IMR-90 (cell line): ENCODE measurements at regions of chrX and their contacts with region 1.

Region 1: DNA sequence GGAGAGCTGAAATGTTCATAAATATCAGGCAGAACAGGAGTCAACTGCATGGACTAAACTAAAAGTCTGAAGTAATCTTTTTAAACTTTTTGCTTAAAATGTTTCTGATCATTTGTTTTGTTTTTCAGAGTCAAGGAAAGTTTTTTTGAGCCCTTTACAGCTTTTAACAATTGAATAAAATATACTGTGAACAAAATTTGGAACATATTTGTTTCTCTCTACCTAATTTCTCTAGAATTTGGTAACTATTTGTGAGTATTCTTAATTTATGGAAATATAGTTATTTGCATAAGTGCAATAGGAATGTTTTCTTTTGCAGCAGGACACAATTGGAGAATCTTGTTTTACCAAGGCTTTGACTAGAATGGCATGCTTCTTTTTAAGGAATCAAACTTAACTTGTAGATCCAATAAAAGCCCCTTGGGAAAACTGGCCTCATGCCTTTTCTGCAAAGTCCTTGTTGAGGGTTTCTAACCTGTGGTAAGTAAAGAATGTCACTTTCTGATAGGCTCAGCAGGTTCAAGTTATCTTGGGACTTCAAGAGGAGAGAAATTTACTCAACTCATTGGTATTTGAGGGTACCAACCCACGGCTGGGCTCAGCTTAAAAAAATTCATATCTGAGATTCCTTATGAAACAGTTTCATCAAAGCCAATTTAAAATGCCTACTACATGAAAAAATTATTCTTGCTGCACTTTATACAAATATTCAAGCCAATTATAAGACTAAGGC is 91.5 kb downstream of the UPRT start:
- DNase-seq: no peak
- ATAC-seq: no peak
- H3K4me3 ChIP-seq: no peak overlapping the region
- H3K27ac ChIP-seq: no peak overlapping the region
- H3K4me1 ChIP-seq: no peaks in the 10 kb centered on the region
- H3K27me3 ChIP-seq: no peaks in the 10 kb centered on the region
- CTCF ChIP-seq: no peak
- POLR2A ChIP-seq: no peak
- RAD21 ChIP-seq: no peak

Region 2: GRCh38 chrX:75076429-75076828 is 289.0 kb before region 1 on chrX:
- CTCF ChIA-PET with region 1: no interaction called
- POLR2A ChIA-PET with region 1: no interaction called
- dilution Hi-C with region 1: no loop called
- in situ Hi-C with region 1: no loop called
- intact Hi-C with region 1: no loop called
- DNase-seq: no peak
- ATAC-seq: no peak
- H3K4me3 ChIP-seq: no peak overlapping the region
- H3K27ac ChIP-seq: no peak overlapping the region
- H3K4me1 ChIP-seq: no peaks in the 10 kb centered on the region
- H3K27me3 ChIP-seq: no peaks in the 10 kb centered on the region; the same call in 1 of the 2 replicates
- CTCF ChIP-seq: no peak
- POLR2A ChIP-seq: no peak
- RAD21 ChIP-seq: no peak

Region 3: DNA sequence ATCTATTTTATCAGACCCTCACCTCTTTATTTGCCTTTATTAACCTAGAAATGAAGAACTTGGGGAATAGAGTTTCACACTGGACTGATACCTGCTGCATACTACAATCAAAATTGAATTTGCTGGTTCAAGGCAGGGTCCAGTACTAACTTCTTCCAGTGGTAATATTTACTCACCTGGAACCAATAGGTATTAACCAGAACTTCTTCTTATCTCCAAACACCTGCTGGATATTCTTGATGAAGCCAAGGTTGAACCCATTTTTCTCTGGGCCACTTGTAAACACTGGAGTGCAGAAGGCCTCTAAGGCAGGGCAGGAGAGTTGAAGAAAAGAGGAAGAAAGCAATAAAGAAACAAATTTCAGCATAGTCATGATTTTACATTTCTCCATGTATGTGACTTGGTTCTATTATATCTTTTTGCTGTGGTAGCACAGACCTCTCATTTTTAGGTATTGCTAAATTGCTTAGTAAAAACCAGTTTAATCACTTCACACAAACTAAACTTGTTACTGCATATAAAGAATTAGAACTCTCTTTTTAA is 56.4 kb after region 1 on chrX:
- CTCF ChIA-PET with region 1: no interaction called
- POLR2A ChIA-PET with region 1: no interaction called
- dilution Hi-C with region 1: no loop called
- in situ Hi-C with region 1: no loop called
- intact Hi-C with region 1: loop called (anchors 10 kb)
- DNase-seq: no peak
- ATAC-seq: no peak
- H3K4me3 ChIP-seq: no peak overlapping the region
- H3K27ac ChIP-seq: no peak overlapping the region
- H3K4me1 ChIP-seq: no peaks in the 10 kb centered on the region
- H3K27me3 ChIP-seq: no peaks in the 10 kb centered on the region
- CTCF ChIP-seq: no peak
- POLR2A ChIP-seq: no peak
- RAD21 ChIP-seq: no peak

Region 4: DNA sequence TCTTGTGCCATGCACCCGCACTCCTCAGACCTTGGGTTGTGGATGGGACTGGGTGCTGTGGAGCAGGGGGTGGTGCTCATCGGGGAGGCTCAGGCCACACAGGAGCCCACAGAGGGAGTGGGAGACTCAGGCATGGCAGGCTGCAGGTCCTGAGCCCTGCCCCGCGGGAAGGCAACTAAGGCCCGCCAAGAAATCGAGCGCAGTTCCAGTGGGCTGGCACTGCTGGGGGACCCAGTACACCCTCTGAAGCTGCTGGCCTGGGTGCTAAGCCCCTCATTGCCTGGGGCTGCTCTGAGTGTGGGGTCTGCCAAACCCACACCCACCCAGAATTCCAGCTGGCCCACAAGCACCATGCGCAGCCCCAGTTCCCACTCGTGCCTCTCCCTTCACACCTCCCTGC is 1631.2 kb after region 1 on chrX:
- CTCF ChIA-PET with region 1: no interaction called
- POLR2A ChIA-PET with region 1: no interaction called
- dilution Hi-C with region 1: no loop called
- in situ Hi-C with region 1: no loop called
- intact Hi-C with region 1: no loop called
- DNase-seq: no peak
- ATAC-seq: no peak
- H3K4me3 ChIP-seq: no peak overlapping the region
- H3K27ac ChIP-seq: no peak overlapping the region
- H3K4me1 ChIP-seq: no peaks in the 10 kb centered on the region
- H3K27me3 ChIP-seq: no peaks in the 10 kb centered on the region
- CTCF ChIP-seq: no peak
- POLR2A ChIP-seq: no peak
- RAD21 ChIP-seq: no peak